CD4-positive, alpha-beta memory T cell (primary cell): ENCODE measurements at regions of chr12 and their contacts with region 1.

Region 1: DNA sequence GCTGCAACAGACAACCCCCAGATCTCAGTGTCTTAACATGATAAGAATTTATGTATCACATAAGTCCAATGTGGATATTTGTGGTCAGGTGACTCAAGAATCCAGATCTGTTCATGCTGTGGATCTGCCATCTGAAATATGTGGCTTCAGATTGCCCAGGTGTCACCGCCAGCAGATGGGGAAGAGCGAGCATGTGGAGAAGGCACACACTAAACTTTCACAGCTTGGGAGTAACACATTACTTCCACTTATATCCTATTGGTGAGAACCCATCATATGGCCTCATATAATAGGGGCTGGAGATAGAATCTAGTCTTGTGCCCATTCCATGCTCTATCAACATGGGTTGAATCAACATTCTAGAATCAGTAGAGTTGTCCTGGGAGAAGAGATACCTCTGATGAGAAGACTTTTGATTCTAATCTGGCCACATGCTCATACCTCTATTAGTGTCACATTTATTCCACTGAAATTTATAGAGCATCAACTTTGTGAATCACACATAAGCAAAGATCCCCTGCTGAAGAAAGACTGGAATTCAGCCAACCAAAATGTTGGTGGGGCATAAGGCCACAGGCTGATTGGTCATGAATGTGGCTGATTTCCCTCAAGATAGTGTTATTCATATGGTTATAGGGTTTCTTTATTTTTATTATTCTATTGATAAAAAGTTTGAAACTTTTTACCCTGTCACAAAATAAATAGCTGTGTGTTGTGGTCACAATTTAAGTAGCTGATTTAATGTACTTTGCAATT is 6.0 kb upstream of the CALCOCO1 start:
- DNase-seq: no peak
- H3K4me3 ChIP-seq: no peak overlapping the region
- H3K4me3 Mint-ChIP-seq: no peak overlapping the region
- H3K27ac ChIP-seq: no peak overlapping the region
- H3K27ac Mint-ChIP-seq: no peak overlapping the region
- H3K4me1 ChIP-seq: peaks cover under 1% of the 10 kb centered on the region
- H3K4me1 Mint-ChIP-seq: peaks cover 4 to 26% (median 10%) of the 10 kb centered on the region in 4 donors
- H3K27me3 ChIP-seq: peaks cover 10% of the 10 kb centered on the region
- H3K27me3 Mint-ChIP-seq: peaks cover 6 to 13% of the 10 kb centered on the region in 2 donors

Region 2: DNA sequence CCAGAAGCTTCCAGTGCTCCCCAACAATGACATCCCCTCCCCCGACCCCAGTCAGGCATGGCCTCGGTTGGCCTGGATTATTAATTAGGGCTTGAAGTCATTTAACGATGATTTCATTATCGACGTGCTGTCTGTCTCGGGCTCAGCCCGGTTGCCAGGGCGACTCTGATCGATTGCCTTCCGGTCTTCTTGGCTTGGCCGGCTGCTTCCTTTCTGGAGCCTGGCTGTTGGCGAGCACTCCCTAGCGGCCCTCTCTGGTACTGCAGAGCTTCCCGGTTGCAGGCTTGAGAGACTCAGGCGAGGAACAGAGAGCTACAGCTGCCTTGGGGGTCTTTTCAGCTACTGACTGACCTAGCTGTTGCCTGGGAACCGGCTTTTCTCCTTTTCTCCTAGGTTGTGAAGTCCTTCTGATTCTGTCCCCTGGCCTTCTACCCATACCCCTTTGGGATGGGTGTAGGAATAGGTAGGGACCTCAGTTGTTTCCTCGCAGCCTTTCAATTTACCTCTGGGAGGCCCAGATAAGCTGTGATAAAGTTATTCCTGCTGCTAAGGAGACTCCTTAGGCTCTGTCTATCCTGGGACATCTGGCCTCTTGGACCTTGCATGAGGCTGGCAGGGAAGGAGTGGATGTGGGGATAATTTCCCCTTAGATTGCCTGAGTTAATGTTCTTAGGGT is 24.0 kb after region 1 on chr12:
- CTCF ChIA-PET with region 1: interaction called, 16 read pairs
- POLR2A ChIA-PET with region 1: no interaction called
- intact Hi-C with region 1: no loop called
- DNase-seq: peak; percentile 67 to 74 (median 71)
- H3K4me3 ChIP-seq: peak overlapping the region in 1 of 2 donors; percentile 12
- H3K4me3 Mint-ChIP-seq: peak overlapping the region; percentile 47 to 75 (median 65)
- H3K27ac ChIP-seq: no peak overlapping the region
- H3K27ac Mint-ChIP-seq: peak overlapping the region in 5 of 7 donors; percentile 39 to 83 (median 65)
- H3K4me1 ChIP-seq: peaks cover 11% of the 10 kb centered on the region
- H3K4me1 Mint-ChIP-seq: peaks cover 2 to 10% (median 8%) of the 10 kb centered on the region in 4 donors
- H3K27me3 ChIP-seq: peaks cover 21% of the 10 kb centered on the region
- H3K27me3 Mint-ChIP-seq: peaks cover 27 to 31% of the 10 kb centered on the region in 2 donors